Endothelial cell of umbilical vein (primary cell): ENCODE measurements at regions of chr1 and their contacts with region 1.

Region 1: GRCh38 chr1:98405581-98406059 is 255.9 kb upstream of the SNX7 start:
- DNase-seq: no peak
- H3K4me3 ChIP-seq: no peak overlapping the region
- H3K27ac ChIP-seq: no peak overlapping the region
- H3K4me1 ChIP-seq: peaks cover 6% of the 10 kb centered on the region
- H3K27me3 ChIP-seq: no peaks in the 10 kb centered on the region
- CTCF ChIP-seq: no peak
- POLR2A ChIP-seq: no peak

Region 2: DNA sequence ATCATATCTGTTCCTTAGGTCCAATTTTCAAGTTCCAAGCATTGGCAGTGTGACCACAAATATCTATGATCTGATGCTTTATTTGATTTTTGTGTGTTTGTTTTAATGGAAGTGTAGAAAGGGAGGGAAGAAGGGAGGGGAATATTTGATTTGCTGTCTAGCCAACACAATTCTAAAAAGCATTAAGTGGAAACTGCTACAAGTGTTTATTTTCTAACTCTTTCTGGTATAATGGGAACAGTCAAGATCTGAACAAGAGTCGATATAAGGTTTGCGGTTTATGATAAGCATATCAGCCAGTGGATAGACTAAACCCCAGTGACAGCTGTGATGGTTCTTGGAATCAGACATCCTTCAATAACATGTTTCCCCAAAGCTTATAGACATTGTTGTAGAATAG is 11.9 kb before region 1 on chr1:
- CTCF ChIA-PET with region 1: interaction called, 10 read pairs
- POLR2A ChIA-PET with region 1: no interaction called
- dilution Hi-C with region 1: no loop called
- intact Hi-C with region 1: no loop called
- DNase-seq: no peak
- H3K4me3 ChIP-seq: no peak overlapping the region
- H3K27ac ChIP-seq: no peak overlapping the region
- H3K4me1 ChIP-seq: peaks cover 14% of the 10 kb centered on the region
- H3K27me3 ChIP-seq: no peaks in the 10 kb centered on the region
- CTCF ChIP-seq: no peak
- POLR2A ChIP-seq: no peak